PC-3 (cell line): ENCODE measurements at regions of chr15 and their contacts with region 1.

Region 1: DNA sequence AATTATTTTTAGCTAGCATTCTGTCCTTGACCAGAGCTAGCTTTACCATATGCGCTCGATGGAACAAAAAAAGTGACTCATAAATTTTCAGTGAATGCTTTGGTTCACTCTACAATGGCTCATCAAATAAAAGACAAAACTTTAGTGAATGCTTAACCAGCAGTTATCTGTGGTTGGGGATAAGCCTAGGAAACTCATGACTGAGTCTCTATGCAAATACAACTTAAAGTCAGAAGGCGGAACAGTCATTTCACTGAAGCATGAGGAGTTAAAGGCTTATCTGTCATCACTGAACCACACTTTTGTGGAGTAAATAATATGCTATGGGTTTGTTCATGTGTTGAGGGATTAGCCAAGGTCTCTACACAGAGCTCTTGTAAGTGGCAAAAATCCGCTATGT is 308.4 kb downstream of the SQOR start:
- DNase-seq: peak; percentile 91
- ATAC-seq: peak; percentile 96
- H3K4me3 ChIP-seq: no peak overlapping the region
- H3K27ac ChIP-seq: peak overlapping the region; percentile 66
- H3K4me1 ChIP-seq: peaks cover 18% of the 10 kb centered on the region
- H3K27me3 ChIP-seq: no peaks in the 10 kb centered on the region
- CTCF ChIP-seq: no peak

Region 2: DNA sequence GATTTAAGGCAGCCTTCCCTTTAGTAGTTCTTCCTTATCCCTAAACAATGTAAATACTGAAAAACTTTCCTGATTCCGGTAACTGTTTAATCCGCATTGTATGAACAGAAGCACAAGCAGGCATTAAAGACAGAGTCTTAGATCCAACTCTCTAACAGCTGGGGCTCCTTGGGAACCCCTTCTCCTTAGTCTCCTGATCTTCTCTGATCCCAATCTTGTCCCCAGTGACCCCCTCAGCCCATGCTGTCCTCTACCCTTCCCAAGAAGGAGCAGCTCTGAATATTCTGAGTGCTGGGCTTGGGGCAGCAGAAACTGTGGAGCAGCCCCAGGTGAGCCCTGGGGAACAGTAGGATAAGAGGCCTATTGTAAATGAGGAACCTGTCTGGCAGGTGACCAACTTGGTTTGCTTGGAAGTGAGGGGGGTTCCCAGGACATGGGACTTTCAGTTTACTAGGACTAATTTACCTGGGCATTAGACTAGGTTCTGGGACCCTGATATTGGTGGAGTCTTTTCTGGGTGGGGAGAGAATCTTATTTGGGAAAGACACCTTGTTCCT is 407.7 kb before region 1 on chr15:
- CTCF ChIA-PET with region 1: no interaction called
- POLR2A ChIA-PET with region 1: interaction called, 10 read pairs
- intact Hi-C with region 1: no loop called
- DNase-seq: no peak
- ATAC-seq: no peak
- H3K4me3 ChIP-seq: no peak overlapping the region
- H3K27ac ChIP-seq: no peak overlapping the region
- H3K4me1 ChIP-seq: no peaks in the 10 kb centered on the region
- H3K27me3 ChIP-seq: no peaks in the 10 kb centered on the region
- CTCF ChIP-seq: no peak

Region 3: DNA sequence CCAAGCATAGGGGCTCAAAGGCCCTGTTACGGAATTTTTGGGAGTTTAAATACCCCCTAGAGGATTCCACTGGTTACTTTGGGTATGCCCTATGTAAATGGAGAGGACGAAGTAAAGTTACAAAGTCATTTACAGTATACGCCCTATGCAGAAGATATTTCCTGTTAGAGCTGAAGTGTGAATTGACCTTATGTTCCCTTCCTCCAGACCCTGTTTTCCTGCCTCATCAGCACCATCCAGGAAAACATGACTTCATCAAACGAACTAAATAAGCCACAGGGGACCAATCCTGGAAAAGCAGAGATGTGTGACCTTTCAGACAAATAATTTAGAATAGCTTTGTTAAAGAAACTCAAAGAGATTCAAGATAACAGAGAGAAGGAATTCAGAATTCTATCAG is 131.0 kb before region 1 on chr15:
- CTCF ChIA-PET with region 1: no interaction called
- POLR2A ChIA-PET with region 1: no interaction called
- intact Hi-C with region 1: no loop called
- DNase-seq: no peak
- ATAC-seq: no peak
- H3K4me3 ChIP-seq: no peak overlapping the region
- H3K27ac ChIP-seq: no peak overlapping the region
- H3K4me1 ChIP-seq: no peaks in the 10 kb centered on the region
- H3K27me3 ChIP-seq: no peaks in the 10 kb centered on the region
- CTCF ChIP-seq: no peak

Region 4: GRCh38 chr15:45919806-45920205 is 23.4 kb before region 1 on chr15:
- CTCF ChIA-PET with region 1: no interaction called
- POLR2A ChIA-PET with region 1: interaction called, 4 read pairs
- intact Hi-C with region 1: loop called (anchors 2 kb)
- DNase-seq: peak; percentile 88
- ATAC-seq: peak; percentile 100
- H3K4me3 ChIP-seq: no peak overlapping the region
- H3K27ac ChIP-seq: peak overlapping the region; percentile 45
- H3K4me1 ChIP-seq: peaks cover 14% of the 10 kb centered on the region
- H3K27me3 ChIP-seq: no peaks in the 10 kb centered on the region
- CTCF ChIP-seq: no peak